Activated CD8-positive, alpha-beta memory T cell treated with anti-CD3 and anti-CD28 coated beads, Interleukin-2, amount 10 ng/mL, durations not matched to agents 7 days and 5 days (primary cell): ENCODE measurements at regions of chr1 and their contacts with region 1.

Region 1: DNA sequence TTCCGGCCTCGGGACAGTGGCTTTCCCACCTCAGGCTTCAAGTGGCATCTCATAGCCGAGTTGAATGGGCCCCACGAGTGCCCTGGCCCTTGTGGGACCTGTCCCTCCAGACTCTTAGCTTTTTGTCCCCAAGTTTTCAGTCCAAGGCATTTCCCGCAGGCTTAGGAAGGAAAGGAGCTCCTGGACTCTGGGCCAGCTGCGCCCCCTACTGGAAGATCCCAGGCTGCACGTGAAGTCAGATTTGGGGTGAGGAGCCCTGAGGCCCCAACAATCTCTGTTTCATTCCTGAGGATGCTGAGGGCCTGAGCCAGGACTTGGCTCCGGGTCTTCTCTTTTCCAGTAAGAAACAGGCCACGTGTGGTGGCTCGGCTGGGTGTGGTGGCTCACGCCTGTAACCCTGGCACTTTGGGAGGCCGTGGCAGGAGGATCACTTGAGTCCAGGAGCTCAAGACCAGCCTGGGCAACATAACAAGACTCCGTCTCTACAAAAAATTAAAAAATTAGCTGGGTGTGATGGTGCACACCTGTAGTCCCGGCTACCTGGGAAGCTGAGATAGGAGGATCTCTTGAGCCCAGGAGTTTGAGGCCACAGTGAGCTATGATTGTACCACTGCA is 67.4 kb downstream of the ARHGEF10L start:
- DNase-seq: peak; percentile 67
- ATAC-seq: no peak
- H3K4me3 Mint-ChIP-seq: no peak overlapping the region
- H3K27ac Mint-ChIP-seq: no peak overlapping the region
- H3K4me1 Mint-ChIP-seq: no peaks in the 10 kb centered on the region
- H3K27me3 Mint-ChIP-seq: peaks cover 3% of the 10 kb centered on the region

Region 2: DNA sequence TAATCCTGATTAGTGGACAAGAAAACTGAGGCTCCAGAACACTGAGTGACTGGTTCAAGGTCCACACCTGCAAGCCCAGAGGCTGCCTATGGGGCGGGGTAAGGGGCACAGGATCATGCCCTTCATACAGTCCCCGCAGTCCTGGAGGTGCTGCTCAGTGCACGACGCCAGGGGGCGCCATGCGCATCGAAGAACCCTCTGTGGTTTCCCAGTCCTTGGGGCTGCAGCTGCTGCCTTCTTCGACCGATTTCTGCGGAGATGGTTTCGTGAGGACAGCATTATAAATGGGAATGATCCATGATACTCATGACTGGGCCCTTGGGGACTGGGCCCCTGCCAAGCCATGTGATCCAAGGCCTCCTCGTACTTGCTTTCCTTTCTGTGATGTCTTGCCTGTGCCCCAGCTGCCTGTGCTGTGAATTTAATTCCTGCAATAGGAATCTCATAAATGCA is 104.6 kb before region 1 on chr1:
- CTCF ChIA-PET with region 1: interaction called, 40 read pairs
- DNase-seq: peak; percentile 63
- ATAC-seq: peak; percentile 81
- H3K4me3 Mint-ChIP-seq: no peak overlapping the region
- H3K27ac Mint-ChIP-seq: no peak overlapping the region
- H3K4me1 Mint-ChIP-seq: peaks cover 3% of the 10 kb centered on the region
- H3K27me3 Mint-ChIP-seq: peaks cover 8% of the 10 kb centered on the region